HEK293 (cell line): ENCODE measurements at regions of chr5 and their contacts with region 1.

Region 1: DNA sequence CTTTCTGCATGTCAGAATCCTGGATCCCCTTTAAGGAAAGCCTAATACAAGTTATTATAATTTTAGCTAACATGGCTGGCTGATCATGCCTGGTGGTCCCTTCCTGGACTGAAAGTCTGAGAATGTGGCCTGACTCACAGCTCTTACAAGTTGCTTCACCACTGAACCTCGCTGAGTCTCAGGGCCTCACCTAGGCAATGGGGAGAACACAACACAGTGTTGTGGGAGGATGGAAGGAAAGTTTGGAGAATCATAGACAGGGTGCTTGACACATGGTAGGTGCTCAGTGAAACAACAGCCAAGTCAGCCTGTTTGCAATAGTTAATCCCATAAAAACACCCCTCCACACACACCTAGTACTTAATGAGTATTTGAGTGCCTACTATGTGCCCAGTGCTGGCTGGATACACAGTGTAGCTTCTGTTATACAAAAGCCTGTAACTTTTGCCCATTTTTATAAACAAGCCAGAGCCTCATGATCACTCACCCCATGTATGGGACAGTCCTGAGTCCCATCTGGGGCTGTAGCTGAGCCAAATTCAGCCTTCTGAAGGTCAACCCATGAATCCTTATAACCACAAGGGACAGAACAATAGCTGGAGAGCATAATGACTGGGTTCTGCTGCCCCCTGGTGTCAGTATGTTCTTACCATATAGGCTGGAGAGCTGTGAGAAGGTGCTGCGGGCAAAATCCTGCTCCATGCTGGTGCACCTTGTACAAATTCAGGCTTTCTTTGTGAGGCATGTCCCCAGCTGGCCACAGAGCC is 3.9 kb downstream of the ACSL6 start:
- H3K4me3 ChIP-seq: no peak overlapping the region
- H3K27ac ChIP-seq: no peak overlapping the region
- H3K4me1 ChIP-seq: no peaks in the 10 kb centered on the region; the same call in 1 of the 2 replicates
- CTCF ChIP-seq: peak; percentile 74

Region 2: GRCh38 chr5:131423056-131423455 is 584.5 kb before region 1 on chr5:
- CTCF ChIA-PET with region 1: interaction called, 15 read pairs
- POLR2A ChIA-PET with region 1: no interaction called
- H3K4me3 ChIP-seq: no peak overlapping the region
- H3K27ac ChIP-seq: no peak overlapping the region
- H3K4me1 ChIP-seq: no peaks in the 10 kb centered on the region
- CTCF ChIP-seq: peak; percentile 24; the same call in 1 of the 2 replicates

Region 3: GRCh38 chr5:131810510-131811249 is 196.9 kb before region 1 on chr5:
- CTCF ChIA-PET with region 1: interaction called, 21 read pairs
- POLR2A ChIA-PET with region 1: no interaction called
- H3K4me3 ChIP-seq: no peak overlapping the region
- H3K27ac ChIP-seq: no peak overlapping the region
- H3K4me1 ChIP-seq: no peaks in the 10 kb centered on the region
- CTCF ChIP-seq: no peak